ENCODE measurements at regions of chr1 and their contacts with region 1.

Region 1: DNA sequence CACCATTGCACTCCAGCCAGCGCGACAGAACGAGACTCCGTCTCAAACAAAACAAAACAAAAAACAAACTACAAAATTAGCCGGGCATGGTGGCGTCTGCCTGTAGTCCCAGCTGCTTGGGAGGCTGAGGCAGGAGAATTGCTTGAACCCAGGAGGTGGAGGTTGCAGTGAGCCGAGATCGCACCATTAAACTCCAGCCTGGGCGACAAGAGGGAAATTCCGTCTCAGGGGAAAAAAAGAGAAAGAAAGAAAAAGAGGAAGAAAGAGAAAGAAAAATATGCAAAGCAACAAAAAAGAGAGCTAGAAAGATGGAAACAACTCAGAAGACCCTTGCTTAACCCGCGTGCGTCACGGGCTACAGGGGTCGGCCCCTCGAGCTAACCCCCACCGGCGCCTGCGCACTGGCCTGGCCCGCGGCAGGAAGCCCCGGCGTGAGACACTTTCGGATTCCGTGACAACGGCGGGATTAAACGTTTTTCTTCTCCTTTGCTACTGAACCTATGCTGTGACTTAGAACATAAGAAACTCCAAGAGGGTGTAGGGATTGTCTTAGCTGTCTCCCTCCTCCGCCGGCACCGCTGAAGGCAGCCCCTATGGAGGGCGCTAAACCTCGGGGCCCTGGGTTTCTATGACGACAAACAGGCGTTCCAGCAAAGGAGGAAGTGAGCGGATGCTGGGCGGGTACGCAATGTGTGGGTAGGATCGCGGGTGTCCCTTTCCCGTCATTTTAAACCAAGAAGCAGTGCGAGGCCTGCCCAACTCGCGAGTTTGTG is at the start of gene AXDND1:
- DNase-seq: peak; percentile 59 to 62
- ATAC-seq: peak; percentile 88 to 92
- H3K4me3 ChIP-seq: peak within 1 kb of the TSS; percentile 59 to 70 (median 61)
- H3K27ac ChIP-seq: peak within 1 kb of the TSS; percentile 66 to 79 (median 77)
- H3K4me1 ChIP-seq: peaks cover 0 to 6% of the 10 kb centered on the region in 2 donors
- H3K27me3 ChIP-seq: no peaks in the 10 kb centered on the region
- CTCF ChIP-seq: no peak
- POLR2A ChIP-seq: peak in 1 of 2 donors; percentile 14
- total RNA-seq, gene AXDND1: not detected

Region 2: DNA sequence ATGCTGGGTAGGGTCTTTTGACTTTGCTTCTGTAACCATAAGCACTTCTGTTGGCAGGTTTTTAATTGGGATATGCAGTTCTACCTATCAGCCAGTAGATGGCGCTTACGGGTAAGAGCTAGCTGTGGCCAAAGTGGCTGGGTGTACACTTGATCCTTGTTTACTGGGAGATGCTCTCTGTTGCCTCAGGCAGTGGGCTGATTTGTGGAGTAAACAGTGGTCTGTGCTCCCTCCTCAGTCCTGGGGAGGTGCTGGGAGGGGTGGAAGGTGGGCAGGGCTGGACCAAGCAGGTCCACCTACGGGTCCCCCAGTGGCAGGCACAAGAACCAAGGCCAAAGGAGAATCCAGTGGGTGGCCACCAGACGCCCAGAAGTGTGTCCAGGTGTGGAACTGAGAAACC is 597.1 kb before region 1 on chr1:
- in situ Hi-C with region 1: loop called in 2 of 4 experiments (anchors 25 kb)
- intact Hi-C with region 1: no loop called
- DNase-seq: no peak
- ATAC-seq: peak; percentile 42 to 64
- H3K4me3 ChIP-seq: no peak overlapping the region
- H3K27ac ChIP-seq: no peak overlapping the region
- H3K4me1 ChIP-seq: no peaks in the 10 kb centered on the region
- H3K27me3 ChIP-seq: no peaks in the 10 kb centered on the region
- CTCF ChIP-seq: peak; percentile 49 to 81 (median 70)
- POLR2A ChIP-seq: no peak

Region 3: GRCh38 chr1:179121159-179121938 is 244.2 kb before region 1 on chr1:
- in situ Hi-C with region 1: loop called in 1 of 4 experiments (anchors 10 kb)
- intact Hi-C with region 1: no loop called
- DNase-seq: no peak
- ATAC-seq: peak in 1 of 2 donors; percentile 51
- H3K4me3 ChIP-seq: no peak overlapping the region
- H3K27ac ChIP-seq: no peak overlapping the region
- H3K4me1 ChIP-seq: no peaks in the 10 kb centered on the region
- H3K27me3 ChIP-seq: no peaks in the 10 kb centered on the region
- CTCF ChIP-seq: peak; percentile 44 to 60 (median 52)
- POLR2A ChIP-seq: no peak

Region 4: DNA sequence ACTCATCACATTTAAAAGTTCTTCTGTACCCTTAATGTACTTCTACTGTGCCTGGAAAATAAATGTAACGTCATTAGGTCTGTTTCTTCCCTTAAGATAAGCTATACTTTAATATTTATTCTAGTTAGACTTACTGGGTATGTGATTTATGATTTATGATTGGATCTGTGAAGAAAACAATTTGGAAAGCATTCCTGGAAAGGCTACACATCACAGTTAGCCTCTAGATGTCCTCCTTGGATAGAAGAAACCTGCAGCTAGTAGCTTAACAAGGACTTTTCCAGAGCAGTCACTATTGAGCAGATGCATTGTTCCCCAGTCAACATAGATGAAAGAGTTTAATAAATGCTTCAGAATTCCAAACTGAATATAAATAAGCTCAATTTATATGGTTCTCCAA is 113.8 kb before region 1 on chr1:
- in situ Hi-C with region 1: loop called in 1 of 4 experiments (anchors 25 kb)
- intact Hi-C with region 1: loop called (anchors 5 kb)
- DNase-seq: no peak
- ATAC-seq: peak; percentile 46 to 60
- H3K4me3 ChIP-seq: no peak overlapping the region
- H3K27ac ChIP-seq: no peak overlapping the region
- H3K4me1 ChIP-seq: no peaks in the 10 kb centered on the region
- H3K27me3 ChIP-seq: no peaks in the 10 kb centered on the region
- CTCF ChIP-seq: peak in 2 of 5 experiments; percentile 28 to 34
- POLR2A ChIP-seq: no peak

Region 5: GRCh38 chr1:179293340-179294327 is 71.9 kb before region 1 on chr1 and contains the start of gene SOAT1:
- in situ Hi-C with region 1: no loop called
- intact Hi-C with region 1: loop called (anchors 5 kb)
- DNase-seq: peak; percentile 86 to 92
- ATAC-seq: peak; percentile 88 to 89
- H3K4me3 ChIP-seq: peak within 1 kb of the TSS; percentile 81 to 92 (median 86)
- H3K27ac ChIP-seq: peak within 1 kb of the TSS; percentile 87 to 91 (median 89)
- H3K4me1 ChIP-seq: peaks cover 6 to 7% of the 10 kb centered on the region in 2 donors
- H3K27me3 ChIP-seq: no peaks in the 10 kb centered on the region
- CTCF ChIP-seq: peak in 3 of 5 experiments; percentile 9 to 13 (median 12)
- POLR2A ChIP-seq: peak; percentile 75 to 90
- total RNA-seq, gene SOAT1: 5.2 to 11.7 (median 6.4) TPM

Region 6: GRCh38 chr1:179340918-179341317 is 24.6 kb before region 1 on chr1:
- in situ Hi-C with region 1: no loop called
- intact Hi-C with region 1: no loop called
- DNase-seq: no peak
- ATAC-seq: no peak
- H3K4me3 ChIP-seq: no peak overlapping the region
- H3K27ac ChIP-seq: no peak overlapping the region
- H3K4me1 ChIP-seq: no peaks in the 10 kb centered on the region
- H3K27me3 ChIP-seq: no peaks in the 10 kb centered on the region
- CTCF ChIP-seq: no peak
- POLR2A ChIP-seq: no peak